Heart right ventricle (tissue), 16 donors: ENCODE measurements at regions of chr2 and their contacts with region 1.

Region 1: GRCh38 chr2:189179570-189179950 is at the start of gene COL5A2:
- DNase-seq: peak in 1 of 2 donors; percentile 50
- ATAC-seq: peak; percentile 44 to 92 (median 88)
- H3K4me3 ChIP-seq: peak within 1 kb of the TSS in 9 of 10 donors; percentile 41 to 63 (median 57)
- H3K27ac ChIP-seq: peak within 1 kb of the TSS; percentile 40 to 83 (median 74)
- H3K4me1 ChIP-seq: peaks cover 0 to 3% (median 0%) of the 10 kb centered on the region in 9 donors
- H3K27me3 ChIP-seq: peaks cover 0 to 3% (median 0%) of the 10 kb centered on the region in 7 donors
- CTCF ChIP-seq: no peak
- total RNA-seq, gene COL5A2: 4.8 to 44.7 (median 7.5) TPM

Region 2: DNA sequence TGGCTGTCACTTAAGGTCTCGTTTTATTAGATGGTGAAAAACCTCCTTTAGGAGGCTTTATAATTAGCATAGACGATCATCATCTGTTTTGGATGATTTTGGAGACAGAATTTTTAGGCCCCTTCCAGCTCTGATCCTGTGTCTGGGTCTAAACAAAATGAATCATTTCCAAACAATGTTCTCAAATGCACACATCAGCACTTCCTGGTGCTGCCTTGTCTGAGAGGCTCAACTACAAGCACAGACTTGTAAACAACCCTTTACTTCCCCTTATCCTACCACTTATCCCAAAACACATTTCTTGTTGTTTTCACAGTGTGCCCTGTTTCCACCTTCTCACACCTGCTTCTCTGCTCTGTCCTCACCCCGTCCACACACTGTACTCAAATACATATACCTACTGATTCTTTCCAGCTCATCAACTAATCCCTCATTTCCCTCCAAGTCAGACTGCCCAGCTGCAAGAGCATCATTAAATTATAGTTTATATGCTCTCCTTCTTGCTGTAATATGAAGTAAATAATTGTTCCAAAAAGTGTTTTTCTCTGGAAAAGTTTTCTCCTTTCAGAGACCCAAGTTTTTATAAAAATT is 276.6 kb before region 1 on chr2:
- intact Hi-C with region 1: no loop called
- DNase-seq: no peak
- ATAC-seq: no peak
- H3K4me3 ChIP-seq: no peak overlapping the region
- H3K27ac ChIP-seq: no peak overlapping the region
- H3K4me1 ChIP-seq: no peaks in the 10 kb centered on the region
- H3K27me3 ChIP-seq: no peaks in the 10 kb centered on the region
- CTCF ChIP-seq: no peak

Region 3: GRCh38 chr2:189115126-189115525 is 64.4 kb before region 1 on chr2:
- intact Hi-C with region 1: loop called in 2 of 10 experiments (anchors 10 kb)
- DNase-seq: no peak
- ATAC-seq: no peak
- H3K4me3 ChIP-seq: no peak overlapping the region
- H3K27ac ChIP-seq: peak overlapping the region in 1 of 10 donors; percentile 13
- H3K4me1 ChIP-seq: peaks cover 0 to 17% (median 0%) of the 10 kb centered on the region in 9 donors
- H3K27me3 ChIP-seq: no peaks in the 10 kb centered on the region
- CTCF ChIP-seq: peak in 5 of 9 donors; percentile 11 to 49 (median 45)

Region 4: GRCh38 chr2:189129971-189130370 is 49.6 kb before region 1 on chr2:
- intact Hi-C with region 1: loop called in 1 of 10 experiments (anchors 10 kb)
- DNase-seq: no peak
- ATAC-seq: no peak
- H3K4me3 ChIP-seq: no peak overlapping the region
- H3K27ac ChIP-seq: no peak overlapping the region
- H3K4me1 ChIP-seq: peaks cover 0 to 15% (median 0%) of the 10 kb centered on the region in 9 donors
- H3K27me3 ChIP-seq: no peaks in the 10 kb centered on the region
- CTCF ChIP-seq: no peak